OCI-LY7 (cell line): ENCODE measurements at regions of chr1 and their contacts with region 1.

Region 1: DNA sequence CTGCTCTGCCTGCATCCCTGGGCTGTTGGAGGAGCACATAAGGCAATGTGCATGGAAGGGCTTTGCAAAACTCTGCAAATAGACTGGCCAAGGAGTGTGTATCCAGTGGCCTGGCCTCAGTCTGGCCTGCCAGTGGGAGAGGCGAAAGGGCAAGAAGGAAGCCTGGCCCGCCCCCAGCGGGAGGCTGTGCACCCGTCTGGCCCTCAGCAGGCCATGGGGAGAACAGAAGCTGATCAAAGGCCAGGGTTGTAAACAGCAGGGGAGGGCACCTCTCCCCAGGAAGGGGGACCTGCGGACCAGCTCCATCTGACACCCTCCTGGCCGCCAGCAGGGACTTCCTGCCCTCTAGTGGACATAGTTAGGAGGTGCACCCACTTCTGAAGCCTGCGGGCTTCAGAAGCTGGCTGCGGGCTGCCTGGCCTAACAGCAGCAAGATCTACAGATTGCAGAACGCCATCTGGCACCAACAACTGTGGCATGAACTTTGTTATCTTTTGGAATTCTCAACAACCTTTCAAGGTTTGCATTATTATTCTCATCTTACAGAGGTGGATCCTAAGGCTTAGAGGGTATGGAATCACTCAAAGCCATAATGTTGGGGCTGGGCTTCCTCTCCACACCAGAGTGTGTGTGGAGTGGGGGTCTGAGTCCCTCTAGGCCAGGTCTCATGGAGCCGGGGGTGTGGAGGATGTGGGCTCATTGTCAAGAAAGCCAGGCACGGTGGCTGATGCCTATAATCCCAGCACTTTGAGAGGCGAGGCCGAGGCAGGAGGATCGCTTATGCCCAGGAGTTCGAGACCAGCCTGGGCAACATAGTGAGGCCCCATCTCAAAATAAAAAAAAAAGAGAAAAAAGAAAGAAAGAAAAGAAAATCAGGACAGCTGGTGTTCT is 18.9 kb upstream of the CDK18 start:
- DNase-seq: peak; percentile 84
- H3K4me3 ChIP-seq: no peak overlapping the region
- H3K27ac ChIP-seq: no peak overlapping the region
- H3K4me1 ChIP-seq: peaks cover 10% of the 10 kb centered on the region
- CTCF ChIP-seq: peak; percentile 94

Region 2: GRCh38 chr1:205335643-205336091 is 149.9 kb before region 1 on chr1:
- CTCF ChIA-PET with region 1: interaction called, 11 read pairs
- POLR2A ChIA-PET with region 1: no interaction called
- intact Hi-C with region 1: loop called (anchors 1 kb)
- DNase-seq: peak; percentile 82
- H3K4me3 ChIP-seq: no peak overlapping the region
- H3K27ac ChIP-seq: no peak overlapping the region
- H3K4me1 ChIP-seq: no peaks in the 10 kb centered on the region
- CTCF ChIP-seq: peak; percentile 100

Region 3: DNA sequence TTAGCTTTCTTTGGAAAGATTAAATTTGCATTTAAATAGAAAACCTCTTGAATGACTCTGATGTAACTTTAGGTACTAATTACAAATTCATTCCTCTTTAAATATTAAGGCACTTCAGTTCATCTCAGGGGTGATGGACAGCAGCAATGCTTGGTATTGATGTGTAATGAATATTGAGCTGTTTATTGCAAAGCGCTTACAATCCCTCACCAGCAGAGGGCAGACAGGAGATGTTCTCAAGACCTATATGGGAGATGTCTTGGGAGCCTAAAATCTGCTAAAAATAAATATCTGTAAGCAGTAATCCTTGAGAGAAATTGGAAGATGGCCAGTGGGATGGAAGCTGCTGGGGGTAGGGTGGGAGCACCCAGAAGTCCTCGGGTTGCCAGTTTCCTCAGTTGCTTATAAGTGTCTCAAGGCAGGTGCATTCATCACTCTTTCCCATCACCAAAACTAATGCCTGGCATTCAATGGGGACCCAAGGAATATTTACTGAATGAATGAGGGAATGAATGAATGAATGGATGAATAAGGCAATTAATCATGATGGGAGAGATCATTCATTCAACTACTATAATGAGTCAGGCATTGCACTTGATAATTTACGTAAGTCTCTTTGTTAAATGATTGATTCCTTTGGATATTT is 131.2 kb before region 1 on chr1:
- CTCF ChIA-PET with region 1: interaction called, 7 read pairs
- POLR2A ChIA-PET with region 1: interaction called, 4 read pairs
- intact Hi-C with region 1: loop called (anchors 1 kb)
- DNase-seq: peak; percentile 78
- H3K4me3 ChIP-seq: no peak overlapping the region
- H3K27ac ChIP-seq: no peak overlapping the region
- H3K4me1 ChIP-seq: peaks cover 9% of the 10 kb centered on the region
- CTCF ChIP-seq: peak; percentile 96

Region 4: GRCh38 chr1:205396967-205397616 is 88.5 kb before region 1 on chr1:
- CTCF ChIA-PET with region 1: interaction called, 5 read pairs
- POLR2A ChIA-PET with region 1: interaction called, 3 read pairs
- intact Hi-C with region 1: loop called (anchors 1 kb)
- DNase-seq: peak; percentile 79
- H3K4me3 ChIP-seq: no peak overlapping the region
- H3K27ac ChIP-seq: no peak overlapping the region
- H3K4me1 ChIP-seq: peaks cover 13% of the 10 kb centered on the region
- CTCF ChIP-seq: peak; percentile 94

Region 5: DNA sequence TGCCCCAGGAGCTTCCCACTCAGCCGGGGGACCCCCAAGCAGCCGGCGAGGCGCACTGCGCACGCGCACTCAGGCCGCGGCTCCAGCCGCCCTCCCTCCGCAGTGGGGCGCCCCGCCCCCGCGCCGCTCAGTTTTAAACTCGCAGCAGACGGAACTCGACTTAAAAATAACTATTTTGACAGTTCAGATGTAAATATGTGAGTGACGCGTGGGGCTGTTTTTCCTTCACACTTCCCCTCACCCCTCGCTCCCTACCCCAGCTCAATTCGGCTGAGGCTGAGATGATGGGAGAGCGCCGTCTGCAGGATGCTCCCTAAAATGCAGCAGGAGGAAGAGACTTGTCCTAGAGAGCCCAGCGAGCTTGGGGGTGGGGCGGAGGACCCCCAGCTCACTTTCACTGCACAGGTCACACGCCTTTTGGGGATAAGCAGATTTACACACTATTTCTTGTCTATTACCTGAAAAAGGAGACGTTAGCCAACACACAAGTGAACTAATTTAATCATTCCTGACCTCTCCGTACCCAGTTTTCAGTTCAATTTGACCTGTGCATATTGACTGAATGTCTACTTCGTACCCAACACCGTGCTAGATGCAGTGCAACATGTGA is 54.8 kb before region 1 on chr1:
- CTCF ChIA-PET with region 1: no interaction called
- POLR2A ChIA-PET with region 1: no interaction called
- intact Hi-C with region 1: loop called (anchors 2 kb)
- DNase-seq: peak; percentile 88
- H3K4me3 ChIP-seq: peak overlapping the region; percentile 60
- H3K27ac ChIP-seq: peak overlapping the region; percentile 37
- H3K4me1 ChIP-seq: peaks cover 34% of the 10 kb centered on the region
- CTCF ChIP-seq: peak; percentile 97

Region 6: GRCh38 chr1:205513774-205514173 is 28.2 kb after region 1 on chr1:
- CTCF ChIA-PET with region 1: no interaction called
- POLR2A ChIA-PET with region 1: no interaction called
- intact Hi-C with region 1: no loop called
- DNase-seq: no peak
- H3K4me3 ChIP-seq: no peak overlapping the region
- H3K27ac ChIP-seq: no peak overlapping the region
- H3K4me1 ChIP-seq: no peaks in the 10 kb centered on the region
- CTCF ChIP-seq: no peak

Region 7: DNA sequence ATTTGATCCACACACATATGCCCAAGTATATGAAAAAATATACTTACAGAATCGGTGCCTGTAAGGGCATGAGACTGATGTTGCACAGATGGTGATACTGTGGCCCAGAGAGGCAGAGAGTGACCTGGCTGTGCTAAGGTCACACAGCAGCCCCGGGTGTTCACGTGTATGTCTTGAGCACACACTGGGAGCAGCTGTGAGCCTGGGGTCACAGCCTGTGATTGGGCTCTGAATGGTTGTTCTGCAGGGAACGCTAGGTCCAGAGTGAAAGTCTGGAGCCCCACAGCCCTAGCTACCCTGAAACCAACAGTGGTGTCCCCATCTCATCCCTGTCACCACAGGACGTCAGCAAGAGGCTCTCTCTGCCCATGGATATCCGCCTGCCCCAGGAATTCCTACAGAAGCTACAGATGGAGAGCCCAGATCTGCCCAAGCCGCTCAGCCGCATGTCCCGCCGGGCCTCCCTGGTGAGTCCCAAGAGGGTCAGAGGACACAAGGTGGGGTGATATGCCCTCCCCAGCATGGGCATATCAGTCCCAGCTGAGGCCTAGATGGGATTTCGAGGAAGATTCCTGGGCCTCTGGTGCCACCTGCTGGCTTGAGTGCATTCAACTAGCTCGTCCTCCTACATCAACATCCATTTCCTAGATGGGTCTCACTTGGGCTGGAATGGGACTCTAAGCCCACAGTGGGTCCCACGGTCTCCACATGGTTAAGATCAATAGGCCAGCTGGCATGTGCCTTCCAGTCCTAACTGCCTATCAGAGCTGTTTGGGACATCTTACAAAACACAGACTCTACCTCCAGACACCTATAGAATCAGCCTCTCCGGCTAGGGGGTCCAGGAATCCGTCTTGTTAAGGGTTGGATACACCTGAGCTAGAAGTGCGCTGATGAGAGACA is 38.6 kb after region 1 on chr1:
- CTCF ChIA-PET with region 1: interaction called, 21 read pairs
- POLR2A ChIA-PET with region 1: interaction called, 3 read pairs
- intact Hi-C with region 1: loop called (anchors 1 kb)
- DNase-seq: peak; percentile 79
- H3K4me3 ChIP-seq: no peak overlapping the region
- H3K27ac ChIP-seq: no peak overlapping the region
- H3K4me1 ChIP-seq: no peaks in the 10 kb centered on the region
- CTCF ChIP-seq: peak; percentile 90